ENCODE measurements at regions of chr9 and their contacts with region 1.

Region 1: DNA sequence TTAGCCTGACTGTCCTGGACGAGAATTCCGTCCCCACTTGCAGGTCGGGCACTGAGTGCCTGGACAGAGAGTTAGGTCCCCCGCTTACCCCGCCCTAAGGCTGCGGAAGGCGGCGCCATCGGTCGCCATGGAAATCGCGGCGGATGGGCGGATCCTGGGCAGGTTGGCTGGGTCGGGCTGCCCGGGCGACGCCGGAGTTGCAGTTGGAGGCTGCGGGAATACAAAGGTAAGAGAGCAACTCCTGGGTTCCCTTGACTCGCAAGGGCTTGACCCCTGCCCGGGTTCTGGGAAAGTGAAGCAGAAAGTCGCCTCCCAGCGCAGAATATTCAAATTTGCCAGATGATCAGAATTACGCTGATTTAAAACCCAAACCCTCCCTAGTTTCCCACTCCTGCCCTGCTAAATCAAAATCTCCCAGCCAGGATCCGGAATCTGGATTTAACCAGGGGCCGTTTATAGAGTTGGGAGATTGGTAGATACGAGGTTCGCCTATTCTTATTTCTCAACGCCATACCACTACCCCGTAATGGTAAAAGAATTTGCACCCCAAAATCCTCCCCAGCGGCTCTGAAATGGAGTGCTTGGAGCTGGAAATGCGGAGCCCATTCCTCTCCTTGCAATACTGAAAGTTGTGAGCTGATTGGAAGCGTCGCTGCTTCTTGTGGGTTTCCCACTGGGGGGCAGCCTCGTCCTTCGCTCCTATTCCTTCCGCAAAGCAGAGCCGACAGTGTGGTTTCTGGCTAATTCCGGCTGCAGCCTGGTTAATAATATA is 156.4 kb upstream of the RASEF start:
- DNase-seq: peak; percentile 28
- H3K4me3 Mint-ChIP-seq: peak overlapping the region; percentile 80
- H3K27ac Mint-ChIP-seq: no peak overlapping the region
- H3K4me1 Mint-ChIP-seq: peaks cover 22% of the 10 kb centered on the region
- H3K27me3 Mint-ChIP-seq: peaks cover 18% of the 10 kb centered on the region

Region 2: GRCh38 chr9:83473488-83473971 is 254.2 kb after region 1 on chr9:
- intact Hi-C with region 1: loop called (anchors 5 kb)
- DNase-seq: no peak
- H3K4me3 Mint-ChIP-seq: peak overlapping the region; percentile 65
- H3K27ac Mint-ChIP-seq: peak overlapping the region; percentile 71
- H3K4me1 Mint-ChIP-seq: peaks cover 24% of the 10 kb centered on the region
- H3K27me3 Mint-ChIP-seq: peaks cover 24% of the 10 kb centered on the region

Region 3: GRCh38 chr9:83544002-83544698 is 324.8 kb after region 1 on chr9:
- intact Hi-C with region 1: loop called (anchors 1 kb)
- DNase-seq: no peak
- H3K4me3 Mint-ChIP-seq: no peak overlapping the region
- H3K27ac Mint-ChIP-seq: no peak overlapping the region
- H3K4me1 Mint-ChIP-seq: no peaks in the 10 kb centered on the region
- H3K27me3 Mint-ChIP-seq: peaks cover 19% of the 10 kb centered on the region